A673 (cell line): ENCODE measurements at regions of chr12 and their contacts with region 1.

Region 1: DNA sequence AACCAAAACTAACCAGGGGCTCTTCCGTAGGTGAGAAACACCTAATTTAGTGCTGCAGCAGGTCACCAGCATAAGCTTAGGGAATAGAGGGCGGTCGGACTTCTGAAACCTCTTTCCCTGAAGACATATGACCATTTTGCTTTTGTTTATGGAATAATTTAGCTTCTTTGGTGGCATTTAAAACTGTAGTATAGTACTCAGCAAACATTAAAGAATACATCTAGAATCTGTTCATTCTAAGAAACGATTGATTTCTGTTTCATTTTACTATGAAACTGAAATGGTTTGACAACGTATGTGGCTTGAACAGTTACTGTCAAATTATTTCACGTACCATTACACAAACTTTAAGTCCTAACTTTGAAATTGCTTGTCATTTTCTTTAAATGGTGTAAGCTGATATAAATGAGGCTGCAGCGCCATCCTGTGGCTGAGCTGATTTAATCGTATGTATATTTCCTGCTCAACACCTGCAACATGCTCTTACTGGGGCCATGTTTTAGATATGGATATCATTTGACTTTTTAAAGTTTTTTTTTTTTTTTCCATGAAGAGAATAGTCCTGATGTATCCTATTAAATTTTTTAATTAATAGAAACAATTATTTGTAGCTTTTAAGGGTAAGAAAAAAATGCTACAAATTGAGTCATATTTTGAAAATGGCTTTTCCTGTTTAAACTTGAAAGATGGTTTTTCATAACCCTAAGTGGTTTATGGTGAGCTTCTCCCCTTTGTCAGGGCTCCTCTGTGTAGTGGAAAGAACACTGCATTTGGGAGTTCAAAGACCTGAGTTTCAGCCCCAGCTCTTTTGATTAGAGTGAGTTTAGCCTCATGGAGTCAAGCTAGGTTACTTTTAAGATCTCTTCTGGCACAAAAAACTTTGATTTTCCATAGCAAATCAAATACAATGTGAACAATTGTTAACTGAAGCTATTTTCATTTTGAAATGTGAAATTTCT is 27.4 kb downstream of the CFAP54 start:
- DNase-seq: peak; percentile 80
- H3K4me3 ChIP-seq: no peak overlapping the region
- H3K27ac ChIP-seq: no peak overlapping the region
- H3K4me1 ChIP-seq: no peaks in the 10 kb centered on the region
- H3K27me3 ChIP-seq: no peaks in the 10 kb centered on the region
- CTCF ChIP-seq: peak; percentile 79

Region 2: DNA sequence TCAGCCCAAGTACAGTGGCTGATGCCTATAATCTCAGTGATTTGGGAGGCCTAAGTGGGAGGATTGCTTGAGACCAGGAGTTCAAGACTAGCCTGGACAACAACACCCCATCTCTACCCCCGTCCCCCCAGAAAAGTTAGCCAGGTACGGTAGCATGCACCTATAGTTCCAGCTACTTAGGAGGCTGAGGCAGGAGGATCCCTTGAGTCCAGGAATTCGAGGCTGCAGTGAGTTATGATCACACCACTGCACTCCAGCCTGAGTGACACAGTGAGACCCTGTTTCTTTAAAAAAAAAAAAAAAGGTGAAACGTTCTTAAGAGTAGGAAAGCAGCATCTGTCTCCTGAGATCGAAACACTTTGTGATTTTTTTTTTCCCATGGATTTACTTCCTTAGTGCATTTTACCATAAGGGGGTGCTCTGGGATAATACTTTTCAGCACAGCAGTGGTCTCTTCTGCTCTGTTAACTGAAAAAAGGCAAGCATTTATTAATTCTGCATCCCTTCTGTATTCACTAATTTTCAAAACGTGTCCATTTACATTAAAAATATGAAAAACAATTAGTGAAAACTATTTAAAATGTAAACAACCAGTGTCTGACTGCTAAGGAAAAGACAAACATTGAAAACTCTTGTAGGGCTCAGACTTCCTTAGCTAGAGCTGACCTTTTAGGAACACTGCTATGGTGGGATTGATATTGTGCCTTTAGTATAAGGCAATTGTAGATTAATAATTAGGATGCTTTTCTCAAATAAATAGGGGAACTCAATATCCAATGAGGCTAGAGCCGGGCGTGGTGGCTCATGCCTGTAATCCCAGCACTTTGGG is 934.3 kb before region 1 on chr12:
- CTCF ChIA-PET with region 1: no interaction called
- POLR2A ChIA-PET with region 1: no interaction called
- intact Hi-C with region 1: loop called (anchors 10 kb)
- DNase-seq: peak; percentile 73
- H3K4me3 ChIP-seq: no peak overlapping the region
- H3K27ac ChIP-seq: no peak overlapping the region
- H3K4me1 ChIP-seq: no peaks in the 10 kb centered on the region
- H3K27me3 ChIP-seq: no peaks in the 10 kb centered on the region
- CTCF ChIP-seq: peak; percentile 68

Region 3: DNA sequence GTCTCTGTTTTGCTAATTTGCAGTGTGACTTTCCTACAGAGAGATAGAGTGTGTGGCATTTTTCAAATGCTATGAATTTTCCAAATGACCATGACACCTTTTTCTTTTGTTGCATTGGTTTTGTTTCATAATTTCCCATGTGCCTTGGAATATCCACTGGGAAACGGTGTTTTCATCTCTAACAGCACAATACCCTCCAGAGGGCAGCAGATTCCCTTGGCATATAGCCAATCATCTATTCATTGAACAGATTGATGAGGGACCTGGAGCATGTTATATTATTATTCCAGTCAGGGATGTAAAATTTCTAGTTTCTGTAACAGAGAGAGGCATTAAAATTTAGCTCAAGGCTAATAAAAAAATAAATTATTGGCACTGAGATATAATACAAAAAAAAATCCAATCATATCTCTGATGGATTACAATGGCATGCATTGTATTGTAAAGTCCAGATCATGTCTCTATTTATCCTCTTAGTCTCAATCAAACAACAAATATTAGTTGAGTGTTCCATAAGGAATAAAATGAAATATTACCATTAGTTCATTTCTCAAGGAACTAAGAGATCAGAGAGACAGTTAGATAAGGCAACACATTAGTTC is 696.5 kb before region 1 on chr12:
- CTCF ChIA-PET with region 1: no interaction called
- POLR2A ChIA-PET with region 1: no interaction called
- intact Hi-C with region 1: loop called (anchors 10 kb)
- DNase-seq: peak; percentile 80
- H3K4me3 ChIP-seq: no peak overlapping the region
- H3K27ac ChIP-seq: no peak overlapping the region
- H3K4me1 ChIP-seq: peaks cover 25% of the 10 kb centered on the region
- H3K27me3 ChIP-seq: no peaks in the 10 kb centered on the region
- CTCF ChIP-seq: peak; percentile 70

Region 4: DNA sequence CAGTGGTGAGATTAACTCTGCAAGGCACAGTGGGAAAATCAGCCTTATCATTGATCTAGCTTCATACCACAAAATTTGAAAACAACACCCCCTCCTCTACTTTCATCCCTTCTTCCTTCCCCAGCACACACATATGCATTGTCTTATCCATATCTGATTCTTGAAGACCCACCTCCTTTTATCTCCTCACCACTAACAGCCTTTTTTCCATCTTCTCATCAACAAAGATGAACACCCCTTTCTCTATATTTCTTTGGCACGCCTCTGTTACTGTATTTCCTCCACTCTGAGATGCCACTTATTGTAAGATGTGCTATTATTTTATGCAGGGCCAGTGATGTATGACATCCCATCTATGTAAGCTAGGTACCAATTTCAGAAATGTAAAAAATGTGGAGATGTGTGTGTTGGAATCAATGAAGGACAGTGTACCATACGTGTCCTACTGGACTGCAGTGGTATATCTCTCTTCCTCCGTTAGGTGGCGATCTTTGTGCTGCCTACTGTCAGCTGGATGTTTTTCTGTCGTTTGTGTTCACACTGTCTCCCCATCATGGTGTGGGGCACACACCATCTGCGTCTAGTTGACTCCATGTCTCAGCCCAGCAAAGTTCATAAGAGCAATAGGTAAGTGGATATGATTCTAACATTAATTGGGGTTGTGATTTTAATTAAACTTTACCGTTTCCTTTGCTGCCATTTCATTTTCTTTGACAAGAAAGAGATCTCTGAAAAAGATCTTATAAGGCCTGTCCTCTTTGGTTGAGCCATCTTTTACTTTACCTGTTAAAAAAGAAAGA is 598.4 kb before region 1 on chr12:
- CTCF ChIA-PET with region 1: no interaction called
- POLR2A ChIA-PET with region 1: no interaction called
- intact Hi-C with region 1: loop called (anchors 5 kb)
- DNase-seq: peak; percentile 72
- H3K4me3 ChIP-seq: no peak overlapping the region
- H3K27ac ChIP-seq: no peak overlapping the region
- H3K4me1 ChIP-seq: no peaks in the 10 kb centered on the region
- H3K27me3 ChIP-seq: no peaks in the 10 kb centered on the region
- CTCF ChIP-seq: peak; percentile 90

Region 5: DNA sequence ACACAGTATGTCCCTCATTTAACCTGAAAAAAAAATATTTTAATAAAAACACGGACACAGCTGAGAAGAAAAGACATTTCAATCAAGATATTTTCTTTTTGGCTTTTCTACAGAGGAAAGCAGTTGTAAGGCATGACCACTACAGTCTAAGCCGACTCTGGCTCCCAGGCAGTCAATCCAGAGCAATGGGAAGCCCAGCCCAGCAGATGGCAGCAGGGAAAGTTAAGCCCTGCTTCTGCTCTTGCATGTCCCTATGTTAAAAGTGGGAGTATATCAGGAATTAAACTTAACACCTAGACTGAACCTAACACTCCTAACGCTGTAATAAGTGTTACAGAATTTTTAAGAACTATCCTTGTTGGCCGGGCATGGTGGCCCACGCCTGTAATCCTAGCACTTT is 501.1 kb before region 1 on chr12:
- CTCF ChIA-PET with region 1: no interaction called
- POLR2A ChIA-PET with region 1: no interaction called
- intact Hi-C with region 1: loop called (anchors 5 kb)
- DNase-seq: peak; percentile 27
- H3K4me3 ChIP-seq: no peak overlapping the region
- H3K27ac ChIP-seq: no peak overlapping the region
- H3K4me1 ChIP-seq: no peaks in the 10 kb centered on the region
- H3K27me3 ChIP-seq: no peaks in the 10 kb centered on the region
- CTCF ChIP-seq: peak; percentile 51

Region 6: GRCh38 chr12:96061864-96062453 is 454.8 kb before region 1 on chr12:
- CTCF ChIA-PET with region 1: interaction called, 5 read pairs
- POLR2A ChIA-PET with region 1: no interaction called
- intact Hi-C with region 1: loop called (anchors 1 kb)
- DNase-seq: peak; percentile 88
- H3K4me3 ChIP-seq: no peak overlapping the region
- H3K27ac ChIP-seq: no peak overlapping the region
- H3K4me1 ChIP-seq: no peaks in the 10 kb centered on the region
- H3K27me3 ChIP-seq: no peaks in the 10 kb centered on the region
- CTCF ChIP-seq: peak; percentile 85

Region 7: DNA sequence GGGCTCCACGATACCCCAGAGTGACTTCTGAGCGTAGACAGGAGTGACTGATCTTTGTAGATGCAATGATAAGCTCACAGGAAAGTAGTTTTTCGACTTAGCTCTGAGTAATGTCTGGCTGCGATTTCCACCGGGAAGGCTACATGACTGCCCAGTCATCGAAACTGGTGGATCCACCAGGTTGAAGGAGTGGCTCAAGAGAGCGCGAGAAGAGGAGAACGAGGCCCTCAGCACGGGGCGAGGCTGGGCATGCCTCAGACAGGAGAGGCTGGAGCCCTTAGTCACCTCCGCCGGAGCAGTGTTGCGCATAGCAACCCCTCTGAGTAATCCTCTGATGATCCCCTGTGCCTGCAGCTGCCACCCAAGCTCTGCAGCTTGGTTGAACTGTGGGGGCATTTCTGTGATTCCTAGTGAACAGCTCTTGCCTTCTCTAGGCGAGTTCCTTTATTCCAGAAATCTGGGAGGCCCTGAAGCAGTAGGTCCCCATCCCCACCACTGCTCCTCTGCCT is 297.0 kb before region 1 on chr12:
- CTCF ChIA-PET with region 1: interaction called, 8 read pairs
- POLR2A ChIA-PET with region 1: no interaction called
- intact Hi-C with region 1: loop called (anchors 1 kb)
- DNase-seq: no peak
- H3K4me3 ChIP-seq: no peak overlapping the region
- H3K27ac ChIP-seq: no peak overlapping the region
- H3K4me1 ChIP-seq: peaks cover 8% of the 10 kb centered on the region
- H3K27me3 ChIP-seq: no peaks in the 10 kb centered on the region
- CTCF ChIP-seq: no peak